Esophagus squamous epithelium (tissue), 5 donors: ENCODE measurements at regions of chr2 and their contacts with region 1.

Region 1: GRCh38 chr2:165015052-165015642 is 59.8 kb upstream of the SLC38A11 start:
- DNase-seq: no peak
- H3K4me3 ChIP-seq: no peak overlapping the region
- H3K27ac ChIP-seq: no peak overlapping the region
- H3K4me1 ChIP-seq: peaks cover 0 to 16% (median 0%) of the 10 kb centered on the region in 3 donors
- H3K27me3 ChIP-seq: no peaks in the 10 kb centered on the region
- CTCF ChIP-seq: peak; percentile 63 to 84 (median 68)
- POLR2A ChIP-seq: no peak

Region 2: DNA sequence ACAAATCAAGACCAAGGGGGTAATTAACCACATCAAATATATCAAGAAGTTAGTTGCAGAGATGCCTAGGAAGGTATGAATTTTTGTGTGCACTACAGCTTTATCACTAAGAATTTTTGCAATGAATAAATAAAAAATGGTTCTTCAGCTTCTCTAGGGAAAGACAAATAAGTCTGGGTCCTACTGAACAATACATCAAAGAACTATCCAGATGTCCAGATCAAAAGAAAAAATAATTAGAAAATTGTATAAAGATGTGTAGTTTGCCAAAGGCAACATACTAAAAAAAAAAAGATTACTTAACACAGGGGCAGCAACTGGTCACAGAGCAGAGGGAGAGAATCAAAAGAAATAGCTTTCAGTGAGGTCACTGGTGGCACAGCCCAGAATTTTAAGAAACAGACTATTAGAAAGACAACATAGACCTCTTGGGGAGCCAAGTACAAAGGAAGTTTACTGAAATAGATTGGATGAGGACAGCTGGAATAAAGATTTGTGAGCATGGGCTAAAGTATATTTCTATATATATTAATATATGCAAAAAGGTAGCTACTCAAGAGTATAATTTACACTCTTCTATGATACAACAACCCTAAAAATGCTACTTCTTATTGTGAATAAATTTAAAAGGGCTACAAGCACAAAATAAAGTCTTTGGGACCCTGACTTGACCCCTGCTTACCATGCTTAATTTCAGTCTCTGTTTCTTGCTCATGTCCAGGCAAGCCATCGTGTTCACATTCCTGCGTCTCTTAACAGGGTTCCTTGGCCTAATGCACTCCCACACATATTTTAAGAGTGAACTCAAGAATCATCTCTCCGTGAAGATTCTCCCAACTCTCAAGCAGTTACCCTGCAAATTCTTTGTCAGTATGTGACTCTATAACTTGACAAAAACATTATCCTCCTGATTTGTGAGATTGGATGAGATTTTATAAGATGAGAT is 294.9 kb before region 1 on chr2:
- intact Hi-C with region 1: no loop called
- DNase-seq: no peak
- H3K4me3 ChIP-seq: no peak overlapping the region
- H3K27ac ChIP-seq: peak overlapping the region in 1 of 4 donors; percentile 34
- H3K4me1 ChIP-seq: peaks cover 0 to 16% (median 0%) of the 10 kb centered on the region in 3 donors
- H3K27me3 ChIP-seq: no peaks in the 10 kb centered on the region
- CTCF ChIP-seq: no peak
- POLR2A ChIP-seq: no peak

Region 3: DNA sequence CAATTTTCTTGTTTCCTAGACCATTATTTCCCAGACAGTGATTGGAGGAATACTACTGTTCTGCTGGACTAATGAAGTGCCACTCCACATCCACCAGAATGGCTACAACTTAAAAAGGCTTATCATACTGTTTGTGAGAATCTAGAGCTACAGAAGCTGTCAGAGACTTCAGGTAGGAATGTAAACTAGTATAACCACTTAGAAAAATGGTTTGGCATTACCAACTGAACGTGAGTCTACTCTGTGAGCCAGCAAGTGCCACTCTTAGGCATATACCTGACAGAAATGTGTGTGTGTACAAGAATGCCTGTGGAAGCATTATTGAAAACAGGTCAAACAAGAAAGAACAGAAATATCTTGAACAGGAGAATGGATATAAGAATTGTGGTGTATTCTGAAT is 192.9 kb after region 1 on chr2:
- intact Hi-C with region 1: loop called (anchors 5 kb)
- DNase-seq: no peak
- H3K4me3 ChIP-seq: no peak overlapping the region
- H3K27ac ChIP-seq: no peak overlapping the region
- H3K4me1 ChIP-seq: no peaks in the 10 kb centered on the region
- H3K27me3 ChIP-seq: no peaks in the 10 kb centered on the region
- CTCF ChIP-seq: no peak
- POLR2A ChIP-seq: no peak